WTC11 (cell line): ENCODE measurements at regions of chrX and their contacts with region 1.

Region 1: GRCh38 chrX:68196939-68197791 is 236.1 kb downstream of the OPHN1 start:
- DNase-seq: peak; percentile 16
- ATAC-seq: peak; percentile 87
- H3K4me3 Mint-ChIP-seq: no peak overlapping the region
- H3K27ac Mint-ChIP-seq: no peak overlapping the region
- H3K4me1 Mint-ChIP-seq: peaks cover 6% of the 10 kb centered on the region
- H3K27me3 Mint-ChIP-seq: no peaks in the 10 kb centered on the region
- CTCF ChIP-seq: peak; percentile 54; the same call in 1 of the 2 replicates

Region 2: GRCh38 chrX:68273887-68274286 is 76.7 kb after region 1 on chrX:
- CTCF ChIA-PET with region 1: interaction called, 17 read pairs
- POLR2A ChIA-PET with region 1: no interaction called
- DNase-seq: peak; percentile 21
- ATAC-seq: peak; percentile 83
- H3K4me3 Mint-ChIP-seq: no peak overlapping the region
- H3K27ac Mint-ChIP-seq: no peak overlapping the region; the same call in 1 of the 2 replicates
- H3K4me1 Mint-ChIP-seq: peaks cover 26% of the 10 kb centered on the region
- H3K27me3 Mint-ChIP-seq: peaks cover 3% of the 10 kb centered on the region; the same call in 1 of the 2 replicates
- CTCF ChIP-seq: no peak

Region 3: GRCh38 chrX:68433155-68433980 is 236.2 kb after region 1 on chrX and contains the start of gene OPHN1:
- CTCF ChIA-PET with region 1: interaction called, 13 read pairs
- POLR2A ChIA-PET with region 1: no interaction called
- DNase-seq: peak; percentile 77
- ATAC-seq: peak; percentile 90
- H3K4me3 Mint-ChIP-seq: peak within 1 kb of the TSS; percentile 89
- H3K27ac Mint-ChIP-seq: peak within 1 kb of the TSS; percentile 97
- H3K4me1 Mint-ChIP-seq: peaks cover 19% of the 10 kb centered on the region
- H3K27me3 Mint-ChIP-seq: no peaks in the 10 kb centered on the region
- CTCF ChIP-seq: no peak
- total RNA-seq, gene OPHN1: 3.7 to 4.7 TPM (median 4.4 TPM) in 3 replicates

Region 4: DNA sequence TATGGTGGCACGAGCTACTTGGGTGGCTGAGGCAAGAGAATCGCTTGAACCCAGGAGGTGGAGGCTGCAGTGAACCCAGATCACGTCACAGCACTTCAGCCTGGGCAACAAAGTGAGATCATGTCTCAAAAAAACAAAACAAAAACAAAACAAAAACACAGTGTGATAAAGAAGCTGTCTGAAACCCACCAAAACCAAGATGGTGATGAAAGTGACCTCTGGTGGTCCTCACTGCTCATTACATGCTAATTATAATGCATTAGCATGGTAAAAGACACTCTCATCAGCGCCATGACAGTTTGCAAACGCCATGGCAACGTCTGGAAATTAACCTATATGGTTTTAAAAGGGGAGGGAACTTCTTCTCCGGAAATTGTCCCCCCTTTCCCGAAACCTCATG is 265.5 kb after region 1 on chrX:
- CTCF ChIA-PET with region 1: interaction called, 13 read pairs
- POLR2A ChIA-PET with region 1: no interaction called
- DNase-seq: peak; percentile 12
- ATAC-seq: peak; percentile 60
- H3K4me3 Mint-ChIP-seq: no peak overlapping the region
- H3K27ac Mint-ChIP-seq: no peak overlapping the region
- H3K4me1 Mint-ChIP-seq: peaks cover 5% of the 10 kb centered on the region
- H3K27me3 Mint-ChIP-seq: no peaks in the 10 kb centered on the region
- CTCF ChIP-seq: peak; percentile 53

Region 5: GRCh38 chrX:68490599-68490998 is 293.4 kb after region 1 on chrX:
- CTCF ChIA-PET with region 1: interaction called, 11 read pairs
- POLR2A ChIA-PET with region 1: no interaction called
- DNase-seq: no peak
- ATAC-seq: peak; percentile 93
- H3K4me3 Mint-ChIP-seq: no peak overlapping the region
- H3K27ac Mint-ChIP-seq: no peak overlapping the region
- H3K4me1 Mint-ChIP-seq: no peaks in the 10 kb centered on the region
- H3K27me3 Mint-ChIP-seq: no peaks in the 10 kb centered on the region
- CTCF ChIP-seq: no peak

Region 6: DNA sequence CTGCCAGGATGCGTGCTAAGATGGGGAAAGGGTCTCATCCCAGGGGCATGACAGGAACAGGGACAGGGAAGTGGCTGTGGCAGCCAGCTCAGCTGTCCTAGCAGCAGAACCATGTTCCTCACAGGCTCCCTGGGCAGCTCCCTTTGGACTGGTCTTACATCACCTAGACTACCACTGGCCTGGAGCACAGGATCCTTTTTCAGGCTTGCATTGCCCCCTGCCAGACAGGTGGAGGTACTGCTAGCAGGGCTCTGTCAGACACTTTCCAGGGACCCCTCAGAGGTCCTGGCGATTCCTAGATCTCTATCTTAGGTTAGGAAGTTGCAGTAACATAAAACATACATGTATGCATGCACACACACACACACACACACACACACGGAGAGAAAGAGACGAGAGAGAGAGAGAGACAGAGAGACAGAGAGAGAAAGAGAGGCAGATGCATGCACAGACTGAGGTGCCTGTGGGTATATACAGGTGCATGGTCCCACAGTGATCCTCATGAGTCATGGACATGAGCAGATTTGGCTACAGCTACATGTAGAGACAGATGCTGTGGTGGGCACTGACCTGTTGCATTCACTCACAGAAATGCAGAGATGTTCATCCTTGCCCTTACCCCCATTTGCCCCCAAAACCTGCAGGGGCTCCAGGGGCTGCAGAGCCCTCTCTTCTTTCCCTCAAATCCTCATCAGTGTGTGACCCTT is 513.9 kb after region 1 on chrX:
- CTCF ChIA-PET with region 1: interaction called, 17 read pairs
- POLR2A ChIA-PET with region 1: no interaction called
- DNase-seq: peak; percentile 65
- ATAC-seq: peak; percentile 69
- H3K4me3 Mint-ChIP-seq: no peak overlapping the region
- H3K27ac Mint-ChIP-seq: no peak overlapping the region
- H3K4me1 Mint-ChIP-seq: peaks cover 16% of the 10 kb centered on the region
- H3K27me3 Mint-ChIP-seq: no peaks in the 10 kb centered on the region
- CTCF ChIP-seq: peak; percentile 73; the same call in 1 of the 2 replicates